Activated T-helper 1 cell treated with anti-CD3 and anti-CD28 coated beads, Interleukin-12 subunit alpha, Interleukin-12 subunit beta, Interleukin-2, Interleukin-4 antibody, amounts not matched to agents 30 ng/mL and 10 ng/mL and 1 ng/mL, durations not matched to agents 14 hours and 24 hours and 36 hours (primary cell): ENCODE measurements at regions of chr15 and their contacts with region 1.

Region 1: GRCh38 chr15:79989682-79990081 is 18.7 kb upstream of the BCL2A1 start:
- DNase-seq: no peak
- H3K4me3 Mint-ChIP-seq: no peak overlapping the region
- H3K27ac Mint-ChIP-seq: peak overlapping the region; percentile 16
- H3K4me1 Mint-ChIP-seq: peaks cover 14% of the 10 kb centered on the region
- H3K27me3 Mint-ChIP-seq: peaks cover 5% of the 10 kb centered on the region

Region 2: DNA sequence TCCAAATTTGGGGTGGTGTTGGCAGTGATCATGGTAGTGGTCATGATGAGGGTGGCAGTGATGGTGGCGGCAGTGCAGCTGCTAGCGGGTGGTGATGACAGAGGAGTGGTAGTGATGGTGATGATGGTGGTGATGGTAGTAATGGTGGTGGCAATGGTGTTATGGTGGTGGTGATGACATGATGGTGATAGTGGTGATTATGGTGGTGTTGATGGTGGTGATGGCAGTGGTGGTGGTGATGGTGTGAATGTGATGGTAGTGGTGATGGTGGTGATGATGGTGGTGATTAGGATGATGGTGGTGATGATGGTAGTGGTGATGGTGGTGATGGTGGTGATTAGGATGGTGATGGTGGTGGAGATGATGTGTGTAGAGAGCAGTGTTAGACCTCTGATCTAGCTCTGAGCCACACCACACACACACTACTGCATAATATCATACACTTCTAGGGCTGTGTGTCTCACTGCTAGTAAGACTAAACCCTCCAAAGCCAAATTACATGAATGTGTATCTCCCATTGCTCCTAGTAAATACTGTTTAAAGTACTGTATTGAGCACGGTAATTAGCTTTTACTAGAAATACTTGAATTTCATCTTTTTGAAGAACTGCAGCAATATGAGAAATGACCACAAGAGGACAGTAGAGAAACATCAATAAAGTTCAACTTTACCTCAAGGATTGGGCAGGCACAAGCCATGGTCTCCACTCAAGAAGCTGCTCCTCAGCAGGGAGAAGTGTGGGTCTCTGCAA is 649.9 kb before region 1 on chr15:
- intact Hi-C with region 1: loop called (anchors 1 kb)
- DNase-seq: no peak
- H3K4me3 Mint-ChIP-seq: no peak overlapping the region
- H3K27ac Mint-ChIP-seq: no peak overlapping the region
- H3K4me1 Mint-ChIP-seq: no peaks in the 10 kb centered on the region
- H3K27me3 Mint-ChIP-seq: no peaks in the 10 kb centered on the region

Region 3: GRCh38 chr15:79596051-79596507 is 393.6 kb before region 1 on chr15:
- intact Hi-C with region 1: loop called (anchors 2 kb)
- DNase-seq: peak; percentile 51
- H3K4me3 Mint-ChIP-seq: no peak overlapping the region
- H3K27ac Mint-ChIP-seq: no peak overlapping the region
- H3K4me1 Mint-ChIP-seq: no peaks in the 10 kb centered on the region
- H3K27me3 Mint-ChIP-seq: peaks cover 9% of the 10 kb centered on the region

Region 4: GRCh38 chr15:79834495-79834894 is 155.2 kb before region 1 on chr15:
- intact Hi-C with region 1: no loop called
- DNase-seq: no peak
- H3K4me3 Mint-ChIP-seq: no peak overlapping the region
- H3K27ac Mint-ChIP-seq: no peak overlapping the region
- H3K4me1 Mint-ChIP-seq: peaks cover 18% of the 10 kb centered on the region
- H3K27me3 Mint-ChIP-seq: no peaks in the 10 kb centered on the region

Region 5: DNA sequence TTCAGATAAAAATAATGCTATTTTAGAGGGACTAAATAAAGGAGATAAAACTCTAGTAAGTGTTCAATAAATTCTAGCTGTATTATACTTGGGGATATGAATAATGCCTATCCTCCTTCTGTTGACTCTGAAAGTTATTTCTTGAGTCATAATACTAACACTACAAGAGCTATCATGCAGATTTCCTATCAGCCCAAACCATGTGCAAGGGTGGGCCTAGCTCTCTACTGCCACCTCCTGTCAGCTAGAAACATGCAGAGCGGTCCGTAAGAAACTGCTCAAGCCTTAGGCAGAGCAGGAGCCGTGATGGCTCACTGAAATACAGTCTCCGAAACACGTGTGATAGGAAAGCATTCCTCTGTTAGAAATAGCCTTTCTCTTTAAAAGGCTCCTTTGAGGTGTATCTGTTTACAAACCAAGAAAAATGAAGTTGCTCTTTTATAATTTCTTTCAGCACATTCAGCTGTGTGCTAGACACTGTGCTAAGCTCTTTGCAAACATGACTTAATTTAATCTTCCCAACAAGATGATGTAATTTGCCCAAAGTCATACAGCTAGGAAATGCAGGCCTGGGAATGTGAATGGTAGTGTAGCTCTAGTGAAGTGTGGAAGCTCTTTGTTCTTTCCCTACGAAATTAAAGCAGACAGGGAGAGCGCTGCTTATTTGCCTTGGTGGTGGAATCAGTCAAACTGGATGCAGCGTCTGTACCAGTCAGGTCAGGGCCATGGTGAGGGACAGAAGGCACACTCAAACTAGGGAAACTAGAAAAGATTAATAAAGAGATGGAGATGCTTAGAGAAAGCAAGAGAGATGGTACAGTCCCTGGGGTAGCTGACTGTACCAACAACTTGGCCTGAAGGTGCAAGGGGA is 136.0 kb before region 1 on chr15:
- intact Hi-C with region 1: loop called (anchors 1 kb)
- DNase-seq: peak; percentile 43
- H3K4me3 Mint-ChIP-seq: no peak overlapping the region
- H3K27ac Mint-ChIP-seq: no peak overlapping the region
- H3K4me1 Mint-ChIP-seq: peaks cover 17% of the 10 kb centered on the region
- H3K27me3 Mint-ChIP-seq: no peaks in the 10 kb centered on the region

Region 6: DNA sequence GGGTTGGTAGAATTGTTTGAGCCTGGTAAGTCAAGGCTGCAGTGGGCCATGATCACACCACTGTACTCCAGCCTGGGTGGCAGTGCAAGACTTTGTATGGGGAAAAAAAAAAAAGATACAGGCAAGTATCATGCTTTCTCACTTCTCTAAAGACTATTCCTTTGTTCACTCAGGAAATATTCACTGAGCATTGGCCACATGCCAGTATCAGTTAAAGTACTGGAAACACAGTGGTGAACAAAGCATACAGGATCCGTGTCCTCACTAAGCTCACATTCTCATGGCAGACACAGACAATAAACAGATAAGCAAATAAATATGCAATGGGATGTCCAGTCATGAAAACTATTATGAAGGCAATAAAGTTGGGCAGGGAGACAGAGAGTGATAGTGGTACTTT is 87.7 kb before region 1 on chr15:
- intact Hi-C with region 1: loop called (anchors 1 kb)
- DNase-seq: no peak
- H3K4me3 Mint-ChIP-seq: peak overlapping the region; percentile 15
- H3K27ac Mint-ChIP-seq: peak overlapping the region; percentile 21
- H3K4me1 Mint-ChIP-seq: peaks cover 52% of the 10 kb centered on the region
- H3K27me3 Mint-ChIP-seq: no peaks in the 10 kb centered on the region

Region 7: DNA sequence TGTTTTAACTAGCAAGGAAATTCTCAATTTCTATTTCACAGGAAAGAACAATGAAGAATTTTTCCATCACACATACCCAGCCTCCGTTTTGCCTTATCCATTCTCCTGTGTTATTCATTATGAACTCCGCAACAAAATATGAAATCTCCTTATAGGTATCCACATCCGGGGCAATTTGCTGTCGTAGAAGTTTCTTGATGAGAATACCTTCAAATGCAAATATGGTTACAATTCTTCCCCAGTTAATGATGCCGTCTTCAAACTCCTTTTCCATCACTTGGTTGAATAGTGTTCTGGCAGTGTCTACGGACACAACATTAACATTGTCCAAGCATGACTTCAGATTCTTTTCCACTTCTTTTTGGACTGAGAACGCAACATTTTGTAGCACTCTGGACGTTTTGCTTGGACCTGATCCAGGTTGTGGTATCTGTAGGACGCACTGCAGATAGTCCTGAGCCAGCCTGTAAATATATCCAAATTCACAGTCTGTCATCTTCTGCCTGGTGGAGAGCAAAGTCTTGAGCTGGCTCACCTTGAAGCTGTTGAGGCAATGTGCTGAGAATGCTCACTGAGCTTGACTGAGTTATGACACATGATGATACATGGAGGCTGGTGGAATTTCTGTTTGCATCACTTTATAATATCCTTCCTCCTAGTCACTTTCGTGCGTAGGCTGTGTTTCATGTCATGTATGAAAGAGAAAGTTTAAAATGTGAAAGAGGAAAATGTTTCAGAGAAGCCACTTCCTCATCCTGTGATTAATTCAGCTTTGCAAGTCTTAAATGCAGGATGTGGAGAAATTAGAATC is 18.9 kb before region 1 on chr15 and contains the start of gene BCL2A1:
- intact Hi-C with region 1: loop called (anchors 1 kb)
- DNase-seq: peak; percentile 64
- H3K4me3 Mint-ChIP-seq: peak within 1 kb of the TSS; percentile 96
- H3K27ac Mint-ChIP-seq: peak within 1 kb of the TSS; percentile 96
- H3K4me1 Mint-ChIP-seq: peaks cover 54% of the 10 kb centered on the region
- H3K27me3 Mint-ChIP-seq: no peaks in the 10 kb centered on the region
- total RNA-seq, gene BCL2A1: 91.8 and 95.0 TPM in 2 replicates